ENCODE measurements at regions of chr10 and their contacts with region 1.

Region 1: GRCh38 chr10:129888784-129889616 is 75.1 kb downstream of the EBF3 start:
- DNase-seq: peak; percentile 65 to 93
- H3K4me3 ChIP-seq: no peak overlapping the region
- H3K27ac ChIP-seq: no peak overlapping the region
- H3K4me1 ChIP-seq: peaks cover 0 to 2% (median 0%) of the 10 kb centered on the region in 4 experiments; a peak in 3 of 7 replicates
- H3K27me3 ChIP-seq: no peaks in the 10 kb centered on the region
- CTCF ChIP-seq: peak; percentile 83 to 92 (median 85)
- EP300 ChIP-seq: no peak
- POLR2A ChIP-seq: no peak
- RAD21 ChIP-seq: peak; percentile 63 to 79

Region 2: GRCh38 chr10:129870961-129871621 is 17.9 kb before region 1 on chr10:
- CTCF ChIA-PET with region 1: interaction called, 131 read pairs
- POLR2A ChIA-PET with region 1: no interaction called
- DNase-seq: no peak
- H3K4me3 ChIP-seq: no peak overlapping the region
- H3K27ac ChIP-seq: no peak overlapping the region
- H3K4me1 ChIP-seq: peaks cover 7 to 36% (median 13%) of the 10 kb centered on the region in 4 experiments
- H3K27me3 ChIP-seq: no peaks in the 10 kb centered on the region
- CTCF ChIP-seq: no peak
- EP300 ChIP-seq: no peak
- POLR2A ChIP-seq: no peak
- RAD21 ChIP-seq: no peak

Region 3: DNA sequence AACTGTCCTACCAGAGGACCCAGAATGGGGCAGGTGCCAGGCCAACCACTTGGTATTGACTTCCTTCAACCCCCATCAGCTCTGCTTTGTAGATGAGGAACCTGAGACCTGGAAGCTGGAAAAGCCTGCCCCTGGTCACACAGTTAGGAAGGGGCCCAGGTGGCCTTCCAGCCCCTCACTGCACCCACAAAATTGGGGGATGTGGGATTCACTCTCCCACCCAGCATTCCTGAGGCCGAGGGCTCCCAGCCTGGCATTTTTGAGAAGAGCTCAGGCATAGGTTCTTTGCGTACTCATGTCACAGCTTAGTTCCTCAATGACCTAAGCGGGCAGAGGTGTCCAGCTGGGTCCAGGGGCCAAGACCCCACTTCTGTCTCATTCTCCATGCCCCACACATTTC is 28.9 kb after region 1 on chr10:
- CTCF ChIA-PET with region 1: interaction called, 11 read pairs
- POLR2A ChIA-PET with region 1: no interaction called
- DNase-seq: no peak
- H3K4me3 ChIP-seq: no peak overlapping the region
- H3K27ac ChIP-seq: no peak overlapping the region
- H3K4me1 ChIP-seq: no peaks in the 10 kb centered on the region
- H3K27me3 ChIP-seq: no peaks in the 10 kb centered on the region
- CTCF ChIP-seq: no peak
- EP300 ChIP-seq: no peak
- POLR2A ChIP-seq: no peak
- RAD21 ChIP-seq: no peak

Region 4: DNA sequence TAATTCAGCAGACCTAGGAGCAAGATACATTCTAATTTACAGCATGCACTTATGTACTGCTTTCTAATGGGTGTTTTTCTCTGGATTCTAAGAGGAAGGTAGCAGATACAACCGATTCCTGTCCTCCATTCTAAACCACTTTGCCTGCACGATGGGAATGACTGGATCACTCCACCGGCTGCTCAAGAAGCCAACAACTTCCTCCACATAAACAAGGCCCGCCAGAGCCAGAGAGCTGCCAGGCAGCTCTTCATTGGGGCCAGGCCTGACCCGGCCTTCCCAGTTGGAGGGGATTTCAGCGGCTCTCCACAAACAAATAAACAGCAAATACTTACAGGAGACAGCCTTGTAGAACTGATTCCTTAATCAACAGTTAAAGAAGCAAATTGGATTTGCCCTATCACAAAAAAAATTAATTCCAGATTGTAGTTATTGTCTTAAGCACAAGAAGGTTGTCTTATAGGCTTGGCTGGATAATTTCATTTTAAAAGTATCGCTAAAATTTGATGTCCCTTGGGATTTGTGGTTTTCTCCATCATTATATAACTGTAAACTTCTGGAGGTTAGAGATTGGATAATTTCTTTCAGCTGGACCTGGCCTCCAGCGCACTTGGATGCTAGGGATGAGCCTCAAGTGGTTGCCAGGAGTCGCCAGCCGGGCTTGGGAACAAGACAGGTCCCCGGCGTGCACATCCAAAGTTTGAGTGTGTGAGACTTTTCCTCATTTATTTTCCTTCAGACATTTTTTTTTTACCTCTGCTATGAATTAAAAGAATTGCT is 54.1 kb after region 1 on chr10:
- CTCF ChIA-PET with region 1: interaction called, 12 read pairs
- POLR2A ChIA-PET with region 1: no interaction called
- DNase-seq: no peak
- H3K4me3 ChIP-seq: no peak overlapping the region
- H3K27ac ChIP-seq: no peak overlapping the region
- H3K4me1 ChIP-seq: no peaks in the 10 kb centered on the region
- H3K27me3 ChIP-seq: no peaks in the 10 kb centered on the region; a peak in 1 of 7 replicates
- CTCF ChIP-seq: no peak
- EP300 ChIP-seq: no peak
- POLR2A ChIP-seq: no peak
- RAD21 ChIP-seq: no peak

Region 5: GRCh38 chr10:130003787-130004613 is 115.0 kb after region 1 on chr10:
- CTCF ChIA-PET with region 1: no interaction called
- POLR2A ChIA-PET with region 1: no interaction called
- DNase-seq: no peak
- H3K4me3 ChIP-seq: no peak overlapping the region
- H3K27ac ChIP-seq: no peak overlapping the region
- H3K4me1 ChIP-seq: no peaks in the 10 kb centered on the region
- H3K27me3 ChIP-seq: no peaks in the 10 kb centered on the region
- CTCF ChIP-seq: no peak
- EP300 ChIP-seq: no peak
- POLR2A ChIP-seq: no peak
- RAD21 ChIP-seq: no peak

Region 6: DNA sequence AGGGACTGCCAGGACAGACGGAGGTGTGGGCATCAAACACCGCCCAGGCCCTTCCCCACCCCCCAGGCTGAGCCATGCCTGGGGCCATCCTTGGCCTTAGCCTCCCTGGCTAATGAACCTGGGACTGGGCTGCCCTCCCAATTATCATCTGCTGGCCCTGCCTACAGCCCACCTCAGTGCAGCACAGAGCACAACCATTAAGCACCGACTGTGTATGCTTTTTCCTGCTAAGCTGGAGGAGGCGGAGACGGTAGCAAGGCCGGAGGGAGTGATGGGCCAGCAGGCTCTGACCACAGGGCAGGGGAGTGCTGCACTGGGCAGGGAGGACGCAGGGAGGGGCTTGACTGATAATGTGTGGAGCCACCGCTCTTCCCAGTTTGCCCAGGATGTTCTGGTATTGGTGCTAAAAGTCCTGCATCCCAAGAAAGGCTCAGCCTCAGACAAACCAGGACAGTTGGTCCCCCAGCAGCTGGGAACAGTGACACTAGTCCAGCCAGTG is 149.7 kb after region 1 on chr10:
- CTCF ChIA-PET with region 1: no interaction called
- POLR2A ChIA-PET with region 1: no interaction called
- DNase-seq: peak in 1 of 2 experiments; percentile 34
- H3K4me3 ChIP-seq: no peak overlapping the region
- H3K27ac ChIP-seq: no peak overlapping the region
- H3K4me1 ChIP-seq: peaks cover 0 to 4% (median 0%) of the 10 kb centered on the region in 4 experiments; a peak in 1 of 7 replicates
- H3K27me3 ChIP-seq: no peaks in the 10 kb centered on the region; a peak in 1 of 7 replicates
- CTCF ChIP-seq: no peak
- EP300 ChIP-seq: no peak
- POLR2A ChIP-seq: no peak
- RAD21 ChIP-seq: no peak